A549 (cell line): ENCODE measurements at regions of chr1 and their contacts with region 1.

Region 1: GRCh38 chr1:153288634-153289275 is 24.0 kb downstream of the PGLYRP3 start:
- DNase-seq: peak; percentile 35 to 71
- ATAC-seq: peak; percentile 82 to 97
- H3K4me3 ChIP-seq: no peak overlapping the region
- H3K27ac ChIP-seq: no peak overlapping the region
- H3K4me1 ChIP-seq: no peaks in the 10 kb centered on the region
- CTCF ChIP-seq: peak; percentile 49
- EP300 ChIP-seq: no peak
- POLR2A ChIP-seq: no peak
- RAD21 ChIP-seq: peak; percentile 30 to 31; a peak in 2 of 5 replicates

Region 2: GRCh38 chr1:153302308-153302707 is 13.6 kb after region 1 on chr1:
- CTCF ChIA-PET with region 1: interaction called, 12 read pairs
- POLR2A ChIA-PET with region 1: no interaction called
- DNase-seq: no peak
- ATAC-seq: no peak
- H3K4me3 ChIP-seq: no peak overlapping the region
- H3K27ac ChIP-seq: no peak overlapping the region
- H3K4me1 ChIP-seq: no peaks in the 10 kb centered on the region
- CTCF ChIP-seq: no peak
- EP300 ChIP-seq: no peak
- POLR2A ChIP-seq: no peak
- RAD21 ChIP-seq: no peak